ENCODE measurements at regions of chr15 and their contacts with region 1.

Region 1: GRCh38 chr15:88859550-88859949 is 35.8 kb downstream of the HAPLN3 start:
- DNase-seq: no peak
- H3K4me3 ChIP-seq: no peak overlapping the region
- H3K27ac ChIP-seq: no peak overlapping the region
- H3K4me1 ChIP-seq: no peaks in the 10 kb centered on the region
- H3K27me3 ChIP-seq: no peaks in the 10 kb centered on the region
- CTCF ChIP-seq: no peak
- EP300 ChIP-seq: no peak
- POLR2A ChIP-seq: no peak
- RAD21 ChIP-seq: no peak

Region 2: DNA sequence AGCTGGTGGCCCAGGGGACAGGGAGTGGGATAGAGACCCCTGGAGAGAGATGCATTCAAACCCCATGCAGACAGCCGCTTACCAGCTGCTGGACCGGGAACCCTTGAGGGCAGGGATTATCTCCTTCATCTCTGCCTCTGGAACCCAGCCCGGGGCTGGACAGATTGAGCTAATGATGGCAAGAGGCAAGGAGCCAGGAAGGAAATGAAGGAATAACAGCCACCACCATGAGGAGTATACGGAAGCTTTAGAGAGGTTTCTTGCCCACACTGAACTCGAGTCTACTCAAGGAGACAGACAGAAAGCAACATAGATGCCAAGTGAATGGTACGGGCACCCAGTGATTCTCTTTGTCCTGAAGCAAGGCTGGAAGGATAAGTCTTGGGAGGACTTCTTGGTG is 12.6 kb after region 1 on chr15:
- CTCF ChIA-PET with region 1: interaction called, 11 read pairs
- POLR2A ChIA-PET with region 1: no interaction called
- DNase-seq: no peak
- H3K4me3 ChIP-seq: no peak overlapping the region
- H3K27ac ChIP-seq: no peak overlapping the region
- H3K4me1 ChIP-seq: peaks cover 0 to 4% (median 1%) of the 10 kb centered on the region in 4 experiments; a peak in 2 of 7 replicates
- H3K27me3 ChIP-seq: no peaks in the 10 kb centered on the region
- CTCF ChIP-seq: no peak
- EP300 ChIP-seq: no peak
- POLR2A ChIP-seq: no peak
- RAD21 ChIP-seq: no peak

Region 3: GRCh38 chr15:88878720-88879184 is 19.2 kb after region 1 on chr15:
- CTCF ChIA-PET with region 1: interaction called, 10 read pairs
- POLR2A ChIA-PET with region 1: no interaction called
- DNase-seq: peak in 1 of 2 experiments; percentile 89
- H3K4me3 ChIP-seq: no peak overlapping the region
- H3K27ac ChIP-seq: no peak overlapping the region
- H3K4me1 ChIP-seq: peaks cover 0 to 6% (median under 1%) of the 10 kb centered on the region in 4 experiments; a peak in 3 of 7 replicates
- H3K27me3 ChIP-seq: no peaks in the 10 kb centered on the region
- CTCF ChIP-seq: peak; percentile 89 to 96 (median 95)
- EP300 ChIP-seq: no peak
- POLR2A ChIP-seq: no peak
- RAD21 ChIP-seq: peak; percentile 80 to 87

Region 4: GRCh38 chr15:88970232-88970631 is 110.7 kb after region 1 on chr15:
- CTCF ChIA-PET with region 1: no interaction called
- POLR2A ChIA-PET with region 1: no interaction called
- DNase-seq: no peak
- H3K4me3 ChIP-seq: no peak overlapping the region
- H3K27ac ChIP-seq: no peak overlapping the region
- H3K4me1 ChIP-seq: peaks cover 0 to 4% (median 3%) of the 10 kb centered on the region in 4 experiments; a peak in 5 of 7 replicates
- H3K27me3 ChIP-seq: no peaks in the 10 kb centered on the region
- CTCF ChIP-seq: no peak
- EP300 ChIP-seq: no peak
- POLR2A ChIP-seq: no peak
- RAD21 ChIP-seq: no peak

Measured in H1 (cell line).